MCF 10A (cell line): ENCODE measurements at regions of chr9 and their contacts with region 1.

Region 1: DNA sequence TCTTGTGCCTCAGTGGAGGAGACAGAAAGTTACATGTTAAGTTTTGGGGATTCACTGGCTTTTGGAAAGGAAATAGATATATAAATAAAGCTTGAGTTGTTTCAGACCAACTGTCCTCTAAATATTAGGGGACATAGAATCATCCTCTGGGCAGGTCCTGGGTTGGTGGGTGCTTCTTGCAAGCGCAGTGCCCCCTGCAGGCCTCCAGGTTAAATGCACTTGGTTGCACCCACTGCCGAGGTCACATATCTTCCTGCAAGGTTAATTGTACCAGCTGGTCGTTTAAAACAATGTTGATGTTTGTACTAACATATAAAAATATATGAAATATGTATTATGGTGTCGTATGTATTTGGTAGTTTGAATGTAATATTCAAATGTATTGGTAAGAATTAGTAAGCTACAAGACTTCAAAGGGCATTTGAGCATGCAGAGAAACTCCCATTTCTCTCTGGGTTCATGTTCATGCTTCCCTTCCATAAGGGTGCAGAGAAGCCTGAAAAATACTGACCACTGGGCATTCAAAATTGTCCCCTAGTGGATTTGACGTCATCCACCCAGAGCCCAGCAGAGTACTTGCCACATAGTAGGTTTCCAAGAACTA is 87.0 kb downstream of the ZNF618 start:
- DNase-seq: peak; percentile 59
- H3K4me3 Mint-ChIP-seq: no peak overlapping the region
- H3K27ac Mint-ChIP-seq: peak overlapping the region; percentile 37
- H3K4me1 Mint-ChIP-seq: peaks cover under 1% of the 10 kb centered on the region
- H3K27me3 Mint-ChIP-seq: no peaks in the 10 kb centered on the region
- CTCF ChIP-seq: peak; percentile 72

Region 2: DNA sequence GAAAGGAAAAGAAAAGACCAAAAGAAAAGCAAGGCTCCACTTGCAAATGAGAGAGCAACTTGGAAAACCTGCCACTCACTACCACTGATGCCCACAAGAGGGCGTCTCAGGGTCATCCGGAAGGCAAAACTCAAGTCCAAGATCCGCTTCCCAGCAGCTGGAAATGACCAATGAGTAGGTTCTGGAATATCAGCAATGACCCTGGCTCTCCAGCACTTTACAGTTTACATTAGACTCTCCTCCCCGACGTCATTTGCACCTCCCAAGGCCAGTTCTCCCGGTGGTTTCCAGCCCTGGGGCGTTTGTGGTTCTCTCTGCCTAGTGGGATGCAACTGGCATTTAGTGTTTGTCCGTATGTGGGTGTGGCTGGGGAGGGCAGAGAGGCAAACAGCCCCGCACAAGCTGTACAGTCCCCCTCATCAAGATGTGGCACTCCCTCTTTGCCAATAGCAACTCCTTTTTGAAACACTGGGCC is 280.8 kb before region 1 on chr9:
- CTCF ChIA-PET with region 1: interaction called, 11 read pairs
- POLR2A ChIA-PET with region 1: no interaction called
- intact Hi-C with region 1: loop called (anchors 2 kb)
- DNase-seq: peak; percentile 76
- H3K4me3 Mint-ChIP-seq: no peak overlapping the region
- H3K27ac Mint-ChIP-seq: no peak overlapping the region
- H3K4me1 Mint-ChIP-seq: peaks cover 5% of the 10 kb centered on the region
- H3K27me3 Mint-ChIP-seq: peaks cover 35% of the 10 kb centered on the region
- CTCF ChIP-seq: peak; percentile 93

Region 3: DNA sequence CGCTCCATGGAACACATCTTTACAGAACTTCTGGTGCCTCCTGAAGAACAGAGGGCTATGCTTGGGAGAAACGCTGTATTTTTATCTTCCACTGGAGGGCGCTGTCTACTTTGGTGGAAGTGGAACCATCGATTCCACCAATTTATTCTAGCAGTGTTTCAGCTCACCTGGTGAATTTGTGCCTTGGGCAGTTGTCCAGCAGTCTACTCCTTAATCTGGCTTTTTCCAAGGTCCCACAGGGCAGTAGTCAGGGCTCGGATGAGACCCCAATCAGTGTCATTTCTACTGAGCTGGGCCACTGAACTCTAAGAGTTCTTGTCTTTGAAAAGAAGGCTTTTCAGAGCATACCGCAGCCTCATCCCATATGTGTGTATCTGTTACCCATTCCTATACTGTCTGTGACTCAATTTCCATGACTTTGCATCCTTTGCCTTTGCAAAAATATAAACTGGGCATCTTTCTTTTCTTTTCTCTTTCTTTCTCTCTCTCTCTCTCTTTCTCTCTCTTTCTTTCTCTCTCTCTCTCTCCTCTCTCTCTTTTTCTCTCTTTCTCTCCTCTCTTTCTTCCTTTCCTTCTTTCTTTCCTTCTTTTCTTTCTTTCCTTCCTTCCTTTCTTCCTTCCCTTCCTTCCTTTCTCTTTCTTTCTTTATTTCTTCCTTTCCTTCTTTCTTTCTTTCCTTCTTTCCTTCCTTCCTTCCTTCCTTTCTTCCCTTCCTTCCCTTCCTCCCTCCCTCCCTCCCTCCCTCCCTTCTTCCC is 225.4 kb before region 1 on chr9:
- CTCF ChIA-PET with region 1: interaction called, 3 read pairs
- POLR2A ChIA-PET with region 1: no interaction called
- intact Hi-C with region 1: loop called (anchors 1 kb)
- DNase-seq: peak; percentile 75
- H3K4me3 Mint-ChIP-seq: no peak overlapping the region
- H3K27ac Mint-ChIP-seq: no peak overlapping the region
- H3K4me1 Mint-ChIP-seq: peaks cover 6% of the 10 kb centered on the region
- H3K27me3 Mint-ChIP-seq: peaks cover 3% of the 10 kb centered on the region
- CTCF ChIP-seq: peak; percentile 72

Region 4: DNA sequence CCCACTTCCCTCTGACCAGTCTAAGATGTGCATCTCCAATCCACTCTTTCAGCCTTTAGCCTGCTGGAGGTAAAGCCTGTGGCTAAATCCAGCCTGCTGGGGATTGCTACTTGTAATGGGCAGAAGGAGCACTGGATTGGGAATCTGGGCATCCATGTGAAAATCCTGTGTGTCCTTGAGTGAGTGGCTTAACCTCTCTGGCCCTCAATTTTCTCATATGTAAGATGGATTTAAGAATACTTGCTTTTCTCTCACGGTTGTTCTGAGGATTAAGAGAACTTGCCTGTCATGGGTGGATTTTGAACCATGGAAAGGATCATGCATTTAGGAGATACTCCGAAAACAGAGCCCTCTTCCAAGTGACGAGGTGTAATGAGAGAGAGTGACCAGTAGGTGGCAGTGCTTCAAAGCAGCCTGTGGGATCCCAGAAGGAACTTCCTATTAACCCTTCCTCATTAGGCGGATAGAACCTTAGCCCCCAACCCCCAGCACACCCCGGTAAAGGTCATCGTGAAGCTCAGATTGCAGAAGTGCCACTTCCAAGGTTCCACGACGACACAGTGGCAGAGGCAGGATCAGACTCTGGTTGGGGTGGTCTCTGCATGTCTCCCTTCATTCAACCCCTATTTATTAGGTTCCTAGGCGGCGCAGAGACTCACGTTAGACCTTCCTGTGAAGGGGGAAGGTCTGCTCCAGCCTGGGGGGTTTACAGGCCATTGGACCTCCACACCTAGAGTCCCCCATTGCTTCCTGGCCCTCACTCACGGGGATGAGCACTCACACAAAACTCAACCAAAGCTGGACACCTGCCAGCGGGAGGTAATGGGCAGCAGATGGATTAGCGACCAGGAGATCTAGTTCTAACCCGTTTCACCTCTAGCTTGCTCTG is 155.7 kb before region 1 on chr9:
- CTCF ChIA-PET with region 1: interaction called, 7 read pairs
- POLR2A ChIA-PET with region 1: no interaction called
- intact Hi-C with region 1: loop called (anchors 1 kb)
- DNase-seq: peak; percentile 66
- H3K4me3 Mint-ChIP-seq: peak overlapping the region; percentile 35
- H3K27ac Mint-ChIP-seq: no peak overlapping the region
- H3K4me1 Mint-ChIP-seq: peaks cover 23% of the 10 kb centered on the region
- H3K27me3 Mint-ChIP-seq: peaks cover 3% of the 10 kb centered on the region
- CTCF ChIP-seq: peak; percentile 90

Region 5: GRCh38 chr9:113876151-113876992 is 86.7 kb before region 1 on chr9 and contains the start of gene ZNF618:
- CTCF ChIA-PET with region 1: no interaction called
- POLR2A ChIA-PET with region 1: no interaction called
- intact Hi-C with region 1: loop called (anchors 2 kb)
- DNase-seq: peak; percentile 32
- H3K4me3 Mint-ChIP-seq: peak within 1 kb of the TSS; percentile 85
- H3K27ac Mint-ChIP-seq: peak within 1 kb of the TSS; percentile 81
- H3K4me1 Mint-ChIP-seq: peaks cover 12% of the 10 kb centered on the region
- H3K27me3 Mint-ChIP-seq: no peaks in the 10 kb centered on the region
- CTCF ChIP-seq: peak; percentile 9
- total RNA-seq, gene ZNF618: 4.8 and 6.6 TPM in 2 replicates